ENCODE measurements at regions of chr9 and their contacts with region 1.

Region 1: DNA sequence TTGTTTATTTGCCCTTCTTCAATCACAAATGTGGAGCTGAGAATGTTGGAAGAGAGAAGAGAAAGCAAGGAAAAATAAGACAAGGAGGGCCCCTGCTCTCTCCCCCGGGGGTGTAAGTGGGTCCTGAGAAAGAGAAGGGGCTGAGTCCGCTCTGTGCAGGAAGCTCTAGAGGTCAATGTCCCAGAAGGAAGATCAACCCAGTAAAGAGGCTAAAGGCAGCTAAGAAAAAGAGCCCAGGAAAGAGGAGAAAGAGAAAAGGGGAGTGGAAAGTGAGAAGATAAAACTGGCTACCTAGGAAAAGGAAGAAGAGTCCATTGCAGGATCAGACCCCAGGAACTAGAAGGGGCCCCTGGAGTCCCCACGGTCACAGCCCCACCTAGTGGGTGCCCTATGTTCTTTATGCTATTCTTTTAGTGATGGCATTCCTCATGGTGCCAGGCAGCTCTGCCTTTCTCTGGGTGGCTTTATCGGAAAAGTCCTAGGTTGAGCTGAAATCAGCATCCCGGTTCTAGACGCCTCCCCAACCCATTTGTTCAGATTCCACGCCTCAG is 583.4 kb downstream of the ACTL7B start:
- DNase-seq: peak; percentile 40
- H3K4me3 ChIP-seq: peak overlapping the region; percentile 27 to 42; a peak in 3 of 4 replicates
- H3K27ac ChIP-seq: no peak overlapping the region
- H3K4me1 ChIP-seq: no peaks in the 10 kb centered on the region; a peak in 1 of 4 replicates
- H3K27me3 ChIP-seq: no peaks in the 10 kb centered on the region; the same call in 1 of the 2 replicates
- CTCF ChIP-seq: peak; percentile 58
- EP300 ChIP-seq: no peak
- RAD21 ChIP-seq: peak; percentile 67

Region 2: GRCh38 chr9:108125625-108126024 is 146.8 kb before region 1 on chr9:
- CTCF ChIA-PET with region 1: no interaction called
- POLR2A ChIA-PET with region 1: no interaction called
- DNase-seq: peak; percentile 9
- H3K4me3 ChIP-seq: no peak overlapping the region
- H3K27ac ChIP-seq: no peak overlapping the region
- H3K4me1 ChIP-seq: no peaks in the 10 kb centered on the region
- H3K27me3 ChIP-seq: no peaks in the 10 kb centered on the region; the same call in 1 of the 2 replicates
- CTCF ChIP-seq: peak; percentile 53
- EP300 ChIP-seq: no peak
- RAD21 ChIP-seq: peak; percentile 6; the same call in 1 of the 2 replicates

Region 3: DNA sequence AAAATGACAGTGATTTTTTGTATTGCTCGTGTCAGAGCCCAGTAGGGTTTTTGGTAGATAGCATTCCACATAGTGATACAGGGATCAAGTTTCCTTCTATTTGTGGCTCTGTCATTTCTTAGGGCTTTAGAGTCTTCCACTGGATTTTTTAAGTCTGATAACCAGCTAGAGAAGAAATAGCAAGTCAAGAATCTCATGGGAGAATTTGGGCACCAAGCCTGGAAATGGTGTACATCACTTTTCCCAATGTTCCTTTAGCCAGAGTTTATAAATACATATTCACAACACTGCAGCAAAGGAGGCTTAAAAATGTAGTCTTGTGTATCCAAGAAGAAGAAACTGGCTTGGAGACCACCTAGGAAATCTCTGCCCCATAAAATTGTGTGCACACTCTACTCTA is 135.8 kb before region 1 on chr9:
- CTCF ChIA-PET with region 1: no interaction called
- POLR2A ChIA-PET with region 1: no interaction called
- DNase-seq: no peak
- H3K4me3 ChIP-seq: no peak overlapping the region
- H3K27ac ChIP-seq: no peak overlapping the region
- H3K4me1 ChIP-seq: no peaks in the 10 kb centered on the region
- H3K27me3 ChIP-seq: no peaks in the 10 kb centered on the region
- CTCF ChIP-seq: no peak
- EP300 ChIP-seq: no peak
- RAD21 ChIP-seq: no peak

Region 4: GRCh38 chr9:108282872-108283271 is 10.4 kb after region 1 on chr9:
- CTCF ChIA-PET with region 1: interaction called, 11 read pairs
- POLR2A ChIA-PET with region 1: no interaction called
- DNase-seq: no peak
- H3K4me3 ChIP-seq: no peak overlapping the region
- H3K27ac ChIP-seq: no peak overlapping the region
- H3K4me1 ChIP-seq: no peaks in the 10 kb centered on the region
- H3K27me3 ChIP-seq: no peaks in the 10 kb centered on the region
- CTCF ChIP-seq: peak; percentile 49
- EP300 ChIP-seq: no peak
- RAD21 ChIP-seq: no peak

Measured in SK-N-SH (cell line).